Heart left ventricle (tissue), 16 donors: ENCODE measurements at regions of chr6 and their contacts with region 1.

Region 1: DNA sequence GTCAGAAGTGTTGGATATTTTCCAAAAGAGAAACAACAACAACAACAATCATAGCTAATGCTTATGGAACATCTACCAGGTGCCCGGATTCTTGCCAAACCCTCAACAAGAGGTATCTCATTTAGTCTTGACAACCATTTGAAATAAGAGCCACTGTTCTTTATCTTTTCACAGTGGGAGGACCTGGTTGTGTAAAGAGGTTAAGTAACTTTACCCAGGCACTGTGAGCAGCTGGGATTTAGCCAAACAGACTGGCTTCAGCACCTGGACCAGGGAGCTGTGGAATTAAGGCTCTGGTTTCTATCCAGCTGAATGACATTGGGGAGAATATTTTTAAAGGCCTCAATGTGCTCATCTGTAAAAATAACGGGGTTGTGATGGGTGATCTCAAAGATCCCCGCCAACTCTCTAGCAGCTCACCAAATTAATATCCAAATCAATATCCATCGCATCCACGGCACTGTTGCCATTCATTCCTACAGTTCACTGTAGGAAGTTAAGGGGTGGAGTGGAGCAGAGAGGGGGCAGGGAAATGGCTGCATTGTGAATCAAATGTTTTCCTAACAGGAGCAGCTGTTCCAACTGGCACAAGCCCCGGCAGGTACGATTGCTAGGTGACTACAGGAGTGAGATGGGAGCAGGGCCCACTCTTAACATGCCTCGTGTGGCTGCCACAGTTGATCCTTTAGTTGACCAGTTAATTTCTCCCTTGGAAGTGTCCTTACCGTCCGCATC is 61.8 kb downstream of the GCNT2 start:
- DNase-seq: peak in 2 of 5 donors; percentile 52 to 62
- ATAC-seq: peak in 1 of 4 donors; percentile 60
- H3K4me3 ChIP-seq: no peak overlapping the region
- H3K27ac ChIP-seq: peak overlapping the region in 11 of 12 donors; percentile 25 to 75 (median 46)
- H3K4me1 ChIP-seq: peaks cover 0 to 24% (median 5%) of the 10 kb centered on the region in 12 donors
- H3K27me3 ChIP-seq: no peaks in the 10 kb centered on the region
- CTCF ChIP-seq: no peak
- POLR2A ChIP-seq: no peak

Region 2: DNA sequence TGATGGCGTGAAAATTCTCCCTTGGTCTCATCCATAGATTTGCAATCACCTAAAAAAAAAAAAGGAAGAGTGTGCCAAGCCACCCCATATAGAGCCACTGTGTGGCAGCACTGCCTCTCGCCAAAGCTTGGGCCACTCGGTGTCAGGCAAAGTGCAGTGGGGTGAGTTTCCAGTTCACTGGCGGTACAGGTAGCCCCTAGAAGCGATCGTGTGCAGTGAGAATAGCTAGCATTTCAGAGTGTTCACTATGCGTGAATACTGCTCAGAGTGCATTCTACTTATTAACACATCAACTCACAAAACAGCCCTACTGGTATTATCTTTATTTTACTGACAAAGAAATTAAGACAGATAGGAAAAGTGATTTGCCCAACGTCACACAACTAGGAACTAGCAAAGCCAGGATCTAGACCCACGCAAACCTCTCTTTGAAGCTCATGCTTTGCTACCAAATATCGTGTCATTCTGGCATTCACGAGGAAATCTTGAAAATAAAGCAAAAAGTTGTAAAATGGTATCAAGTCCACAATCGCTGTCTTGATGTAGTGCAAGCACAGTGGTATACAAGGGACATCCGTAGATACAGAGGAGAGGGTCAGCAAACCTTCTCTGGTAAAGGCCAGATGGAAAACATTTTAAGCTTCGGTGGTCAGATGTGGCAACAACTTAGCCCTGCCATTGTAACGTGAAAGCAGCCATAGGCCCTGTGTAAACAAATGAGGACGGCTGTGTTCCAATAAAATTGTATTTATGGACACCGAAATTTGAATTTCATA is 72.2 kb before region 1 on chr6:
- intact Hi-C with region 1: loop called in 1 of 10 experiments (anchors 10 kb)
- DNase-seq: peak; percentile 64 to 81 (median 75)
- ATAC-seq: peak; percentile 91 to 96 (median 92)
- H3K4me3 ChIP-seq: peak overlapping the region in 6 of 12 donors; percentile 7 to 29 (median 14)
- H3K27ac ChIP-seq: peak overlapping the region; percentile 64 to 95 (median 81)
- H3K4me1 ChIP-seq: peaks cover 0 to 16% (median 0%) of the 10 kb centered on the region in 12 donors
- H3K27me3 ChIP-seq: no peaks in the 10 kb centered on the region
- CTCF ChIP-seq: peak; percentile 49 to 75 (median 58)
- POLR2A ChIP-seq: peak in 1 of 2 donors; percentile 6

Region 3: DNA sequence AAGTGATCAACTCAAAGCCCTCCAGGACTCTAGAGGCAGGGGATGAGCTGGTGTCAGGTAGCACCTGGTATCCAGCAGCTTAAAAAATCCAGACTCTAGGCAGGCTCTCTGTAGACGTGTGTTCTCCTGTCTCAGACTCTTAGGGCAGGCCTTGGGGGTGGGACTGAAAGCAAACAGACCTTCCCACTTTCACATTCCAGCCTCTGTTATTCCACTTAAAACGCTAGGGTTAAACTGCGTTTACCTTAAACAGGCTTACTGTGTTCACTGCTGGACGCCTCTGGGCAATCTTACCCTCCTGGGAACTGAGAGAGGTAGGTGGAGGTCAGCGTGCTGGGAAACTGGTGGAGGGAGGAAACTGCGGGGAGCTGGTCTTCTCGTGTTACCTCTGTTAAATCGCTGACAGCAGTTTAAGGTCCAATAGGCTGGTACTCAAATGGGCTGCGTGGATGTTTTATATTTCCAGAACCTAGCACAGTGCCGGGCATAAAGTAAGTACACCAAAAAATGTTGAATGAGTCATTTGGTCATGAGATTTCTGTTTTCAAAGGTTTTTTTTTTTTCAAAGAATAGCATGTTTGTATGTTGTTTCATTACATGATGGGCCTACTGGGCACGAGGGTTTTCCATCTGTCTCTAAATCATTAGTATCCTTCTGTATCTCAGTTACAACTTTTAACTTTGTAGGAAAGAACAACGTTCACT is 61.7 kb before region 1 on chr6 and contains the start of gene GCNT2:
- intact Hi-C with region 1: loop called in 6 of 10 experiments (anchors 5 to 10 kb)
- DNase-seq: peak in 2 of 5 donors; percentile 15 to 43
- ATAC-seq: peak; percentile 58 to 81 (median 76)
- H3K4me3 ChIP-seq: peak within 1 kb of the TSS; percentile 2 to 53 (median 38)
- H3K27ac ChIP-seq: peak within 1 kb of the TSS; percentile 6 to 85 (median 76)
- H3K4me1 ChIP-seq: peaks cover 0 to 34% (median 7%) of the 10 kb centered on the region in 12 donors
- H3K27me3 ChIP-seq: no peaks in the 10 kb centered on the region
- CTCF ChIP-seq: no peak
- POLR2A ChIP-seq: no peak
- total RNA-seq, gene GCNT2: 29.2 to 68.8 (median 43.1) TPM

Region 4: DNA sequence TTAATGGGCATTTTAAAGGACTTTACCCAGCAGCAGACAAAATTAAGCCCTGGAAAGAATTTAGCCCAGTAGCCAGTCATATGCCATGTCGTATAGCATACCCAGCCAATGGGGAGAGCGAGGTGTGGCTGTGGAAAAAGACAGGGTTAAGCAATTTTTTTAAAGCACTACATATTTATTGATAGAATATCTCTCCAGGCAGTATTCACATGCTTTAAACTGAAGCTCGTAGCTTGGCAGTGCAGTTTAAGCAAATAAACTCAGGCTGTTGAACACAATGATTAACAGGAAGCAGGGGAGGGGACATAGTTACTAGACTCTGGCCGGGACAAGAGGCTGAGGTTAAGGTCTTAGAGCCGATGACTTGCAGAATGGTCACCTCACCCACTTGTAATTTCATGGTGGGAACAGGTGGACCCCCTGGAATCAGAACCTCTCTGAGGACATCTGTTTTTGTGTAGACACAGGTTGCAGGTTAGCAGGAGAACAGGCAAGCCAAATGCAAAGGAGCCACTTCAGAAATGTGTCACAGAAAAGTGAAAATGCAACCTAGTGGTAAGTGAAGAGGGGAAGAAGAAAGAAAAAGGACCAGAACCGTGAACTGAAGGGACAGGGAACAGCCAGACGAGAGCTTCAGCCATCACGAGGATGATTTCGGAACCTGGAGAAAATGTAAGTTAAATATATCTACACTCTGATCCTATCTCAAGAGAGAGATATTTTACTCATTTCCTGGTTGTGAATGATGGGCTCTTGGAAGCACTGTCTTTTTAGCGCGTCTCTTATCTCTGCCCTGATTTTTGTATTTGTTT is 54.6 kb before region 1 on chr6:
- intact Hi-C with region 1: loop called in 5 of 10 experiments (anchors 5 to 10 kb)
- DNase-seq: no peak
- ATAC-seq: peak in 3 of 4 donors; percentile 30 to 57 (median 53)
- H3K4me3 ChIP-seq: peak overlapping the region in 9 of 12 donors; percentile 19 to 59 (median 51)
- H3K27ac ChIP-seq: peak overlapping the region in 11 of 12 donors; percentile 20 to 73 (median 61)
- H3K4me1 ChIP-seq: peaks cover 0 to 55% (median 9%) of the 10 kb centered on the region in 12 donors
- H3K27me3 ChIP-seq: no peaks in the 10 kb centered on the region
- CTCF ChIP-seq: no peak
- POLR2A ChIP-seq: no peak

Region 5: DNA sequence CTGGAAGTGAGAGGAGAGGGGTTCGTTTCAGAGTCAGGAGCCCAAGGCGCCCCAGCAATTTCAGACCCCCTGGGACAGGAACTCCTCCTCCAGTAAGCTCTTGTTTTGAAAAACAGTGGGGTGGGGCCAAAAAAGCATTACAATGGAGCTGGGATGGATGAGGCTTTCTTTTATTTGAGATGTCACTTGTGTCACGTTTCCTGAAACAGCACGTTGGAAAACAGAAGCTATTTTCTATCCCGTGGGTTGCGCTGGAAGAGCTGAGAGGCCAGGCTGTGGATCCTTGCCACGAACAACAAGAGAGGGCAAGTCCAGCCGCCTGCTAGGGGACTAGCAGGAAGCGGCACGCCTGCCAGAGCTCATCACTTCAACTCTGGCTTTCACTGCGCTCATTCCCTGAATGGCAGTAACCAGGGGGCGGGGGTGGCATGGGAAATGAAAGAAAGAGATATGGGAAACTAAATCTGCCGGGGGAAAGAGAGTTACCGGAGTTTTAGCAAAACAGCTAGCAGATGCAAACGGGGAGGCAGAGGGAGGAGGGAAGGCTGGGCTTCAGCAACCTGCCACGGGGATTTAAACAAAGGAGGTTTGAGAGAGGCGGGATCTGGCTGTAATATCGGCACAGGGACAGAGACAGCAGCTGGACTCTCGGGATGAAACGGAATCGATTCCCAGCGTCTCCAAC is 27.2 kb before region 1 on chr6:
- intact Hi-C with region 1: loop called in 1 of 10 experiments (anchors 2 kb)
- DNase-seq: peak; percentile 59 to 85 (median 78)
- ATAC-seq: peak; percentile 75 to 92 (median 90)
- H3K4me3 ChIP-seq: peak overlapping the region in 11 of 12 donors; percentile 9 to 51 (median 43)
- H3K27ac ChIP-seq: peak overlapping the region in 11 of 12 donors; percentile 8 to 83 (median 75)
- H3K4me1 ChIP-seq: peaks cover 0 to 49% (median 21%) of the 10 kb centered on the region in 12 donors
- H3K27me3 ChIP-seq: peaks cover 0 to 6% (median 0%) of the 10 kb centered on the region in 9 donors
- CTCF ChIP-seq: no peak
- POLR2A ChIP-seq: no peak